Activated T-helper 1 cell treated with anti-CD3 and anti-CD28 coated beads, Interleukin-12 subunit alpha, Interleukin-12 subunit beta, Interleukin-2, Interleukin-4 antibody, amounts not matched to agents 30 ng/mL and 10 ng/mL and 1 ng/mL, durations not matched to agents 14 hours and 24 hours and 36 hours (primary cell): ENCODE measurements at regions of chr12 and their contacts with region 1.

Region 1: GRCh38 chr12:110937104-110937641 is 16.8 kb upstream of the MYL2 start:
- DNase-seq: peak; percentile 17
- H3K4me3 Mint-ChIP-seq: no peak overlapping the region
- H3K27ac Mint-ChIP-seq: no peak overlapping the region
- H3K4me1 Mint-ChIP-seq: peaks cover 5% of the 10 kb centered on the region
- H3K27me3 Mint-ChIP-seq: no peaks in the 10 kb centered on the region

Region 2: GRCh38 chr12:110893956-110894355 is 43.2 kb before region 1 on chr12:
- intact Hi-C with region 1: loop called (anchors 2 kb)
- DNase-seq: no peak
- H3K4me3 Mint-ChIP-seq: no peak overlapping the region
- H3K27ac Mint-ChIP-seq: no peak overlapping the region
- H3K4me1 Mint-ChIP-seq: no peaks in the 10 kb centered on the region
- H3K27me3 Mint-ChIP-seq: peaks cover 24% of the 10 kb centered on the region

Region 3: GRCh38 chr12:111298582-111299436 is 361.6 kb after region 1 on chr12:
- intact Hi-C with region 1: loop called (anchors 5 kb)
- DNase-seq: peak; percentile 5
- H3K4me3 Mint-ChIP-seq: no peak overlapping the region
- H3K27ac Mint-ChIP-seq: no peak overlapping the region
- H3K4me1 Mint-ChIP-seq: no peaks in the 10 kb centered on the region
- H3K27me3 Mint-ChIP-seq: no peaks in the 10 kb centered on the region

Region 4: GRCh38 chr12:111313833-111314259 is 376.7 kb after region 1 on chr12:
- intact Hi-C with region 1: loop called (anchors 1 kb)
- DNase-seq: peak; percentile 37
- H3K4me3 Mint-ChIP-seq: no peak overlapping the region
- H3K27ac Mint-ChIP-seq: peak overlapping the region; percentile 58
- H3K4me1 Mint-ChIP-seq: peaks cover 7% of the 10 kb centered on the region
- H3K27me3 Mint-ChIP-seq: peaks cover 6% of the 10 kb centered on the region